A549 (cell line): ENCODE measurements at regions of chr22 and their contacts with region 1.

Region 1: DNA sequence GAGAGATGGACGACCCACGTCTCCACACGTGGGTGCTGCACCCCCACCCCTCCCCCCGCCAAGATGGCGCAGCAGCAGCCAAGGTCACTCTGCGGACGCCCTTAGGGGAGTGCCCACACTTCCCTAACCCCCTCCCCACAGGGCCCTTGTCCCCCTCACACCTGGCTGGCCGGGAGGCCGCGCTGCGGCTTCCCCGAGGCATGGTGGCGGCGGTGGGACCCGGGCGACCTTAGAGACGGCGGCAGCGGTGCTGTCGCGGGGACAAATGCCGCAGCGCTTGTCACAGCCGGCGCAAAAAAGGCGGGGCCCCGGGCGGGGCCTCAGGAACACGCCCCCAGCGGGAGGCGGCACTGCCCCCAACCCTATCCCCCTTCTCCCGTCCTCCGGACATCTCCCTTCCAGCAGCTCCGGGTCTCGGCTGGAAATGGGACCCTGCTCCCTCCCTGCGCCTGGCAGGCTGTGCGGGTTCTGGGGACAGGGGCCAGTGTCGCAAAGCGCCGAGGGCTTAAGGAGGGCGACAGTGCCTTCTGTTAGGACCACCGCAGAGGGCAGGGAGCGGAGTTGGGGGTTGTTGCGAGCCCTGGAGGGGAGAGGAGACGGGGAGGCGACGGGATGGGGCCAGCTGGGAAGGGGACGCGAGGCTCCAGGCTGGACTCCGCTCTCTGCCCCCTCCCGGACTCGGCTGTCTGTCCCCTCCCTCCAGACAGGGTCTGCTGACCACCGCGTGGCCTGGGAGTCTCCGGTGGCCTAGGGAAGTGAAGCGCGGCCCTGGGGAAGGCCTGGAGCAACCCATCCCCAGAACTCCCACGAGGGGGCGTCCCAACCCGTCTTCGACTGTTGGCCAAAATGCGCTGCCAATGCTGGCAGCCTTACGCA is at the start of gene CHCHD10:
- DNase-seq: peak; percentile 65 to 77
- ATAC-seq: peak; percentile 79 to 87
- H3K4me3 ChIP-seq: peak within 1 kb of the TSS; percentile 66
- H3K27ac ChIP-seq: peak within 1 kb of the TSS; percentile 88 to 96
- H3K4me1 ChIP-seq: peaks cover 32% of the 10 kb centered on the region
- CTCF ChIP-seq: peak; percentile 55
- EP300 ChIP-seq: no peak
- POLR2A ChIP-seq: peak; percentile 52
- RAD21 ChIP-seq: peak; percentile 48 to 50
- polyA plus RNA-seq, gene CHCHD10: 33.0 and 59.4 TPM in 2 replicates

Region 2: GRCh38 chr22:23686416-23687024 is 81.4 kb before region 1 on chr22:
- CTCF ChIA-PET with region 1: no interaction called
- POLR2A ChIA-PET with region 1: no interaction called
- DNase-seq: no peak
- ATAC-seq: no peak
- H3K4me3 ChIP-seq: no peak overlapping the region
- H3K27ac ChIP-seq: no peak overlapping the region
- H3K4me1 ChIP-seq: no peaks in the 10 kb centered on the region
- CTCF ChIP-seq: no peak
- EP300 ChIP-seq: no peak
- POLR2A ChIP-seq: no peak
- RAD21 ChIP-seq: no peak

Region 3: DNA sequence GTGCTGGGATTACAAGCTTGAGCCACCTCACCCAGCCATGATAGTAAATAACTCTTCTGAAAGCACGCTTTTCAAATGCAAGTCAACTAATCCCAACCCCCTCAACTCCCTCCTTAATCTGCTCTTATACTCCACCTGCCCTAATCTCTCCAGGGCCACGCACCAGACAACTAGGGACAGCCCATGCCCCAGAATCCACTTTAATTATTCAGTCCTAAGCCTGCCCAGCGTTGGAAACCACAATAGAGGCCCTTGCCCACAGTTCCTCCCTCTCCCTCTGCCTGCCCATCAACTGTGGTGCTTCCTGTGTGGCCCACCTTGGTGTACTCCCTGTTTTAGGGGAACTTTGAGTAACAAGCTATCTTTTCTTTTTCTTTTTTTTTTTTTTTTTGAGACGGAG is 11.0 kb before region 1 on chr22:
- CTCF ChIA-PET with region 1: interaction called, 22 read pairs
- POLR2A ChIA-PET with region 1: interaction called, 3 read pairs
- DNase-seq: no peak
- ATAC-seq: no peak
- H3K4me3 ChIP-seq: no peak overlapping the region
- H3K27ac ChIP-seq: no peak overlapping the region
- H3K4me1 ChIP-seq: no peaks in the 10 kb centered on the region; the same call in 2 of the 3 replicates
- CTCF ChIP-seq: no peak
- EP300 ChIP-seq: no peak
- POLR2A ChIP-seq: no peak
- RAD21 ChIP-seq: no peak

Region 4: GRCh38 chr22:23786752-23787599 is 19.1 kb after region 1 on chr22 and contains the start of gene SMARCB1:
- CTCF ChIA-PET with region 1: interaction called, 14 read pairs
- POLR2A ChIA-PET with region 1: no interaction called
- DNase-seq: peak; percentile 85 to 86
- ATAC-seq: peak; percentile 75 to 83
- H3K4me3 ChIP-seq: peak within 1 kb of the TSS; percentile 89
- H3K27ac ChIP-seq: peak within 1 kb of the TSS; percentile 99 to 100
- H3K4me1 ChIP-seq: peaks cover 29% of the 10 kb centered on the region
- CTCF ChIP-seq: no peak
- EP300 ChIP-seq: no peak
- POLR2A ChIP-seq: peak; percentile 45
- RAD21 ChIP-seq: no peak
- polyA plus RNA-seq, gene SMARCB1: 98.1 and 133 TPM in 2 replicates

Region 5: GRCh38 chr22:23826465-23827199 is 58.7 kb after region 1 on chr22:
- CTCF ChIA-PET with region 1: interaction called, 12 read pairs
- POLR2A ChIA-PET with region 1: no interaction called
- DNase-seq: no peak
- ATAC-seq: no peak
- H3K4me3 ChIP-seq: no peak overlapping the region
- H3K27ac ChIP-seq: peak overlapping the region in 1 of 2 experiments; percentile 37; a peak in 1 of 6 replicates
- H3K4me1 ChIP-seq: no peaks in the 10 kb centered on the region
- CTCF ChIP-seq: no peak
- EP300 ChIP-seq: no peak
- POLR2A ChIP-seq: no peak
- RAD21 ChIP-seq: no peak